ENCODE measurements at regions of chr22 and their contacts with region 1.

Region 1: GRCh38 chr22:30423982-30424963 is 1.3 kb upstream of the MTFP1 start:
- DNase-seq: peak; percentile 99
- ATAC-seq: peak; percentile 79
- H3K4me3 Mint-ChIP-seq: peak overlapping the region; percentile 93
- H3K27ac Mint-ChIP-seq: peak overlapping the region; percentile 96
- H3K4me1 Mint-ChIP-seq: peaks cover 42% of the 10 kb centered on the region
- H3K27me3 Mint-ChIP-seq: no peaks in the 10 kb centered on the region
- CTCF ChIP-seq: no peak

Region 2: DNA sequence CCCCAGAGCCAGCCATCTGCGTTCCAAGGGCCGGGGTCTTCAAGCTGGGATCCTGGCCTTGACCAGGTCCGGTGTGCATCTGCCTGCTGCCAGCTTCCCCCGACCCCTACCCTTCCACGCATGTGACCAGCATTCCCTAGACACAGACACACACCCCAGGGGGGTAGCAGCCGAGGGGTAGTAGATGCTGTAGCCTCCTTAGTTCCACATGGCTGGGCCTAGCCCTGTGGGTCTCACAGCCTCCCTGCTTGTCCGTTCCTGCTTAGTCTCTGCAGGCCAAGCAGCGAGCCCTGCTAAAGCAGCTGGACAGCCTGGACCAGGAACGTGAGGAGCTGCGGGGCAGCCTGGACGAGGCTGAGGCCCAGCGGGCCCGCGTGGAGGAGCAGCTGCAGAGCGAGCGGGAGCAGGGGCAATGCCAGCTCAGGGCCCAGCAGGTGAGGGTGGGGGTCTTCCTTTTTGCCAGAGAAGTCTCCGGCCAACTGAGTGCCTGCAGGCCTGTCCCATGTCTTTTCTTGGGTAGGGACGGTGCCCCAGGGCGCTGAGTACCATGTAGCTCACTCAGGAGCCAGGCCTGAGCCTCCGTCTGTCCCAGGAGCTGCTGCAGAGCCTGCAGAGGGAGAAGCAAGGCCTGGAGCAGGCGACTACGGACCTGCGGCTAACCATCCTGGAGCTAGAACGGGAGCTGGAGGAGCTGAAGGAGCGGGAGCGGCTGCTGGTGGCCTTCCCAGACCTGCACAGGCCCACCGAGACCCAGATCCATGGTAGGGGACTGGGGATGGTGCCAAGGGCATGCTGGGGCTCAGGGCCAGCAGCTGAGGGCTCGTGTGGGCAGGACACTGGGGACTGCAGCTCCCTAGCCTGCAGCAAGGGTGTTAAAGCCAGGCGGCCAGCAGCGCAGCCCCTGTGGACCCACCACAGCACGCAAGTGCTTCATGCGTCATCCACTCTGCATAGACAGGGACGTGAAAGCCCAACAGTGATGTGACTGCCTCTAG is 50.6 kb before region 1 on chr22:
- CTCF ChIA-PET with region 1: no interaction called
- POLR2A ChIA-PET with region 1: no interaction called
- intact Hi-C with region 1: no loop called
- DNase-seq: no peak
- ATAC-seq: no peak
- H3K4me3 Mint-ChIP-seq: no peak overlapping the region
- H3K27ac Mint-ChIP-seq: no peak overlapping the region
- H3K4me1 Mint-ChIP-seq: no peaks in the 10 kb centered on the region
- H3K27me3 Mint-ChIP-seq: no peaks in the 10 kb centered on the region
- CTCF ChIP-seq: no peak

Region 3: GRCh38 chr22:30396871-30397655 is 27.2 kb before region 1 on chr22 and contains the start of gene SEC14L2:
- CTCF ChIA-PET with region 1: interaction called, 138 read pairs
- POLR2A ChIA-PET with region 1: interaction called, 48 read pairs
- intact Hi-C with region 1: no loop called
- DNase-seq: peak; percentile 75
- ATAC-seq: peak; percentile 83
- H3K4me3 Mint-ChIP-seq: peak within 1 kb of the TSS; percentile 85
- H3K27ac Mint-ChIP-seq: peak within 1 kb of the TSS; percentile 74
- H3K4me1 Mint-ChIP-seq: peaks cover 45% of the 10 kb centered on the region
- H3K27me3 Mint-ChIP-seq: no peaks in the 10 kb centered on the region
- CTCF ChIP-seq: no peak
- total RNA-seq, gene SEC14L2: 15.1 to 15.4 TPM

Region 4: GRCh38 chr22:30408414-30409104 is 15.7 kb before region 1 on chr22:
- CTCF ChIA-PET with region 1: interaction called, 11 read pairs
- POLR2A ChIA-PET with region 1: interaction called, 19 read pairs
- intact Hi-C with region 1: no loop called
- DNase-seq: no peak
- ATAC-seq: peak; percentile 61
- H3K4me3 Mint-ChIP-seq: no peak overlapping the region
- H3K27ac Mint-ChIP-seq: no peak overlapping the region
- H3K4me1 Mint-ChIP-seq: peaks cover 15% of the 10 kb centered on the region
- H3K27me3 Mint-ChIP-seq: no peaks in the 10 kb centered on the region
- CTCF ChIP-seq: no peak

Region 5: GRCh38 chr22:30413745-30414524 is 10.3 kb before region 1 on chr22:
- CTCF ChIA-PET with region 1: interaction called, 11 read pairs
- POLR2A ChIA-PET with region 1: interaction called, 19 read pairs
- intact Hi-C with region 1: no loop called
- DNase-seq: no peak
- ATAC-seq: peak; percentile 53
- H3K4me3 Mint-ChIP-seq: no peak overlapping the region
- H3K27ac Mint-ChIP-seq: peak overlapping the region; percentile 79
- H3K4me1 Mint-ChIP-seq: peaks cover 35% of the 10 kb centered on the region
- H3K27me3 Mint-ChIP-seq: no peaks in the 10 kb centered on the region
- CTCF ChIP-seq: no peak

Region 6: GRCh38 chr22:30435674-30436126 is 11.4 kb after region 1 on chr22:
- CTCF ChIA-PET with region 1: interaction called, 65 read pairs
- POLR2A ChIA-PET with region 1: interaction called, 78 read pairs
- intact Hi-C with region 1: no loop called
- DNase-seq: peak; percentile 93
- ATAC-seq: peak; percentile 91
- H3K4me3 Mint-ChIP-seq: peak overlapping the region; percentile 87
- H3K27ac Mint-ChIP-seq: peak overlapping the region; percentile 96
- H3K4me1 Mint-ChIP-seq: peaks cover 32% of the 10 kb centered on the region
- H3K27me3 Mint-ChIP-seq: peaks cover 10% of the 10 kb centered on the region
- CTCF ChIP-seq: peak; percentile 64

Region 7: GRCh38 chr22:30562366-30562765 is 138.1 kb after region 1 on chr22:
- CTCF ChIA-PET with region 1: no interaction called
- POLR2A ChIA-PET with region 1: no interaction called
- intact Hi-C with region 1: no loop called
- DNase-seq: no peak
- ATAC-seq: no peak
- H3K4me3 Mint-ChIP-seq: no peak overlapping the region
- H3K27ac Mint-ChIP-seq: no peak overlapping the region
- H3K4me1 Mint-ChIP-seq: no peaks in the 10 kb centered on the region
- H3K27me3 Mint-ChIP-seq: no peaks in the 10 kb centered on the region
- CTCF ChIP-seq: no peak

Measured in activated CD8-positive, alpha-beta T cell treated with anti-CD3 and anti-CD28 coated beads for 36 hours (primary cell).